ENCODE measurements at regions of chr7 and their contacts with region 1.

Region 1: GRCh38 chr7:148575640-148576411 is 14.7 kb upstream of the C7orf33 start:
- DNase-seq: peak; percentile 83
- H3K4me3 ChIP-seq: no peak overlapping the region
- H3K27ac ChIP-seq: no peak overlapping the region
- H3K4me1 ChIP-seq: no peaks in the 10 kb centered on the region
- H3K27me3 ChIP-seq: no peaks in the 10 kb centered on the region
- CTCF ChIP-seq: peak; percentile 94

Region 2: DNA sequence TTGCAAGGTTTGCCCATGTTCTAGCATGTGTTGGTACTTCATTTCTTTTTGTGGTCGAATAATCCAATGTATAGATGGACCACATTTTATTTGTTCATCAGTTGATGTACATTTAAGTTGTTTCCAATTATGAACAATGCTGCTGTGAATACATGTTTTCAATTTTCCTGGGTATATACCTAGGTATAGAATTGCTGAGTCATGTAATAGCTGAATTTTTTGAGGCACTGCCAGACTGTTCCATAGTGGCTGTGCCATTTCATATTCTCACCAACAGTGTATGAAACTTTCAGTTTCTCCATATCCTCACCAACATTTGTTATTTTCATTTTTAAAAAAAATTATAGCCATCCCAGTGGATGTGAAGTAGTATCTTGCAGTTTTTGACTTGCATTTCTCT is 217.8 kb after region 1 on chr7:
- CTCF ChIA-PET with region 1: no interaction called
- POLR2A ChIA-PET with region 1: no interaction called
- intact Hi-C with region 1: loop called (anchors 5 kb)
- DNase-seq: no peak
- H3K4me3 ChIP-seq: no peak overlapping the region
- H3K27ac ChIP-seq: peak overlapping the region; percentile 14
- H3K4me1 ChIP-seq: no peaks in the 10 kb centered on the region
- H3K27me3 ChIP-seq: no peaks in the 10 kb centered on the region
- CTCF ChIP-seq: no peak

Region 3: GRCh38 chr7:148940702-148941597 is 365.1 kb after region 1 on chr7:
- CTCF ChIA-PET with region 1: no interaction called
- POLR2A ChIA-PET with region 1: no interaction called
- intact Hi-C with region 1: loop called (anchors 1 kb)
- DNase-seq: peak; percentile 92
- H3K4me3 ChIP-seq: peak overlapping the region; percentile 67
- H3K27ac ChIP-seq: peak overlapping the region; percentile 95
- H3K4me1 ChIP-seq: peaks cover 7% of the 10 kb centered on the region
- H3K27me3 ChIP-seq: no peaks in the 10 kb centered on the region
- CTCF ChIP-seq: no peak